HepG2 (cell line): ENCODE measurements at regions of chr2 and their contacts with region 1.

Region 1: DNA sequence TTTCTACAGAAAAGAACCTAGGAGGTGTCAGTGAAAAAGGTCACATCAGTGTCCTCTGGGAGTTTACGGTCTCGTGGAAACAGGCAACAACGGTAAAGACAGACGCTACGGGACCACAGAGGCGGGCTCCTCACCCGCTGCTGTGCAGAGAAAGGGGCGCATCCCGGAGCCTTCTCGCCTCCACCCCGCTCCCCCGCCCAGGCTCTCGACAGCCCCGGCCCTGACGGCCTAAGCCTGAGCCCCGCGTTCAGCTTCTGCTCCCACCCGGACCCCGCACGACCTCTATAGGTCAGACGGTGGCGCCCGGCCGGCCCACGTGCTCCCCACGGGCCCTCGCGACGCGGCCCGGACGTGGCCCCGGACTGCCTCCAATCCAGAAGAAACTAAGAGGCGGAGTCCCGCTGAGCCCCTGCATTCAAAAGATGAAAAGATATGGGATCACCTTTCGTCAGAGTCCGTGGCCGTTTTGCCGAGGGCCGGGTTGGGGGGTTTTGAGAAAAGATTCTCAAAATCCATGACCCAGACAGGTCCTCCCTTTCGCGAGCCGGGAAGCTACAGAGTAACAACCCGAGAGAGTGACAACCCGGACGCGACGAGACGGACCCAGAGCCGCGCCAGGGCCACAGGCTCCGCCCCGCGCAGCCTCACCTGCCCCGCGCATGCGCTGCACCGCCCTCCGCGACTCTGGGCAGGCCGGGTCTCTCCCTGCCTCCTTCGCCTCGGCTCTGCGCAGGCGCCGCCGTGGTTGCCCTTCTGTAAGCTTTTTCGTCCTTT is at the start of gene ZC3H8:
- DNase-seq: peak; percentile 90
- ATAC-seq: peak; percentile 95
- H3K4me3 ChIP-seq: peak within 1 kb of the TSS; percentile 69 to 80 (median 75)
- H3K27ac ChIP-seq: peak within 1 kb of the TSS; percentile 79
- H3K4me1 ChIP-seq: peaks cover 42% of the 10 kb centered on the region
- H3K27me3 ChIP-seq: 0 out of 5 replicates have a peak, but pooled peaks cover 0 to 1% of the 10 kb centered on the region in 2 experiments
- CTCF ChIP-seq: peak; percentile 58
- EP300 ChIP-seq: no peak
- POLR2A ChIP-seq: peak; percentile 91 to 94
- RAD21 ChIP-seq: peak; percentile 43; the same call in 1 of the 2 replicates
- total RNA-seq, gene ZC3H8: 15.4 and 17.0 TPM in 2 replicates

Region 2: DNA sequence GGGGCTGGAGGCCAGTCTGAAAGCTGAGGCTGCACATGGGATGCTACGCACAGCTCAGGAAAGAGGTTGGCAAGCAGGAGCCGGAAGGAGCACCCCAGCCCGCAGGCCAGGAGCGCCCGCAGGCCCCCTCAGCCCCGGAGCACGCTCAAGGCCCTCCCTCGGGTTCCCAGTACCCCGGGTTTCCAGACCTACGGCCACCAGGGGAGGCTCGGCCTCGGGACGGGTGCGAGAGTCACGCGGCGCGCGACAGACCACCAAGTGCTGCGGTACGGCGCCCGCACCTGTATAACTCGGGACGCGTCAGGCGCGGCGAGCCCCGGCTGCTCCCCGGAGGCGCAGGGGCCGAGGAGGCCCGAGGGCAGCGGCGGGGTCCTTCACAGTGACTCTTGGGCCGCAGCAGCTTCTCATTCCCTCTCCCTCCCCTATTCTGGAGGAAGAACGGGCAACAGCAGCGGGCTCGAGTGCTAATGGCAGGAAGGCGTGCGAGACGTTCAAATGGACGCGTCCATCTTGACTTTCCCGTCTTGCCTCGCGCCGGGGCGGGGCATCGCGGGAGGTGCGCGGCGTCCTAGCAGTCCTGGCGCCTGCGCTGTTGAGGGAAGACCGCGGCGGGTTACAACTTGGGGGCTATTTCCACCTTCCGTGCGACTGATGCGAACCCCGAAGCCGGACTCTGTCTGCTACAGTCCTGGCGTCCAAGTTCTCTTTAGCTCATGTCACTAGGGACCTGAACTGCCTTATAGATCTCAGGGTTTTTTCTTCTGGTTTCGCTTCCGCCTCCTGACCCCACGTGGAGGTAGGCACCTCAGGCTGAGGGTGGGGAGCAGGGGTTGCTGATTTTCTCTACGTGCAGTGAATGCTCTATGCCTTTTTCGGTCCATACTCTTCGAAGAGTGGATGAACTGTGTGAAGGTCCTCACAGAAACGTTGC is 370.7 kb before region 1 on chr2 and contains the start of gene ANAPC1:
- CTCF ChIA-PET with region 1: no interaction called
- POLR2A ChIA-PET with region 1: no interaction called
- in situ Hi-C with region 1: no loop called
- intact Hi-C with region 1: loop called (anchors 10 kb)
- DNase-seq: peak; percentile 85
- ATAC-seq: peak; percentile 96
- H3K4me3 ChIP-seq: peak within 1 kb of the TSS; percentile 89 to 97 (median 96)
- H3K27ac ChIP-seq: peak within 1 kb of the TSS; percentile 87
- H3K4me1 ChIP-seq: peaks cover 26% of the 10 kb centered on the region
- H3K27me3 ChIP-seq: no peaks in the 10 kb centered on the region; a peak in 1 of 5 replicates
- CTCF ChIP-seq: peak; percentile 15
- EP300 ChIP-seq: no peak; a peak in 1 of 4 replicates
- POLR2A ChIP-seq: peak; percentile 97 to 99
- RAD21 ChIP-seq: peak; percentile 53
- total RNA-seq, gene ANAPC1: 89.7 and 109 TPM in 2 replicates

Region 3: GRCh38 chr2:112121682-112122254 is 132.9 kb before region 1 on chr2:
- CTCF ChIA-PET with region 1: no interaction called
- POLR2A ChIA-PET with region 1: interaction called, 3 read pairs
- in situ Hi-C with region 1: no loop called
- intact Hi-C with region 1: loop called (anchors 5 kb)
- DNase-seq: peak; percentile 55
- ATAC-seq: no peak
- H3K4me3 ChIP-seq: no peak overlapping the region
- H3K27ac ChIP-seq: no peak overlapping the region
- H3K4me1 ChIP-seq: no peaks in the 10 kb centered on the region
- H3K27me3 ChIP-seq: no peaks in the 10 kb centered on the region
- CTCF ChIP-seq: peak; percentile 73
- EP300 ChIP-seq: no peak
- POLR2A ChIP-seq: no peak
- RAD21 ChIP-seq: peak; percentile 56; the same call in 1 of the 2 replicates

Region 4: GRCh38 chr2:112138159-112138773 is 116.4 kb before region 1 on chr2 and contains the start of gene FBLN7:
- CTCF ChIA-PET with region 1: no interaction called
- POLR2A ChIA-PET with region 1: interaction called, 8 read pairs
- in situ Hi-C with region 1: no loop called
- intact Hi-C with region 1: loop called (anchors 5 kb)
- DNase-seq: no peak
- ATAC-seq: peak; percentile 58
- H3K4me3 ChIP-seq: peak within 1 kb of the TSS; percentile 59 to 83 (median 63)
- H3K27ac ChIP-seq: peak within 1 kb of the TSS; percentile 54
- H3K4me1 ChIP-seq: peaks cover 33% of the 10 kb centered on the region
- H3K27me3 ChIP-seq: no peaks in the 10 kb centered on the region; a peak in 2 of 5 replicates
- CTCF ChIP-seq: no peak
- EP300 ChIP-seq: no peak
- POLR2A ChIP-seq: no peak; a peak in 1 of 4 replicates
- RAD21 ChIP-seq: peak; percentile 23; the same call in 1 of the 2 replicates
- total RNA-seq, gene FBLN7: 0.95 and 1.4 TPM in 2 replicates

Region 5: GRCh38 chr2:112187805-112188596 is 66.7 kb before region 1 on chr2:
- CTCF ChIA-PET with region 1: no interaction called
- POLR2A ChIA-PET with region 1: no interaction called
- in situ Hi-C with region 1: no loop called
- intact Hi-C with region 1: no loop called
- DNase-seq: no peak
- ATAC-seq: no peak
- H3K4me3 ChIP-seq: no peak overlapping the region
- H3K27ac ChIP-seq: no peak overlapping the region
- H3K4me1 ChIP-seq: no peaks in the 10 kb centered on the region
- H3K27me3 ChIP-seq: no peaks in the 10 kb centered on the region
- CTCF ChIP-seq: no peak
- EP300 ChIP-seq: no peak
- POLR2A ChIP-seq: no peak
- RAD21 ChIP-seq: no peak

Region 6: GRCh38 chr2:112433932-112434730 is 179.5 kb after region 1 on chr2:
- CTCF ChIA-PET with region 1: interaction called, 18 read pairs
- POLR2A ChIA-PET with region 1: no interaction called
- in situ Hi-C with region 1: loop called (anchors 25 kb)
- intact Hi-C with region 1: loop called (anchors 1 kb)
- DNase-seq: no peak
- ATAC-seq: no peak
- H3K4me3 ChIP-seq: peak overlapping the region in 1 of 3 experiments; percentile 58; a peak in 1 of 6 replicates
- H3K27ac ChIP-seq: no peak overlapping the region
- H3K4me1 ChIP-seq: peaks cover 37% of the 10 kb centered on the region
- H3K27me3 ChIP-seq: peaks cover 0 to 18% of the 10 kb centered on the region in 2 experiments; a peak in 1 of 5 replicates
- CTCF ChIP-seq: no peak
- EP300 ChIP-seq: no peak
- POLR2A ChIP-seq: no peak
- RAD21 ChIP-seq: no peak

Region 7: DNA sequence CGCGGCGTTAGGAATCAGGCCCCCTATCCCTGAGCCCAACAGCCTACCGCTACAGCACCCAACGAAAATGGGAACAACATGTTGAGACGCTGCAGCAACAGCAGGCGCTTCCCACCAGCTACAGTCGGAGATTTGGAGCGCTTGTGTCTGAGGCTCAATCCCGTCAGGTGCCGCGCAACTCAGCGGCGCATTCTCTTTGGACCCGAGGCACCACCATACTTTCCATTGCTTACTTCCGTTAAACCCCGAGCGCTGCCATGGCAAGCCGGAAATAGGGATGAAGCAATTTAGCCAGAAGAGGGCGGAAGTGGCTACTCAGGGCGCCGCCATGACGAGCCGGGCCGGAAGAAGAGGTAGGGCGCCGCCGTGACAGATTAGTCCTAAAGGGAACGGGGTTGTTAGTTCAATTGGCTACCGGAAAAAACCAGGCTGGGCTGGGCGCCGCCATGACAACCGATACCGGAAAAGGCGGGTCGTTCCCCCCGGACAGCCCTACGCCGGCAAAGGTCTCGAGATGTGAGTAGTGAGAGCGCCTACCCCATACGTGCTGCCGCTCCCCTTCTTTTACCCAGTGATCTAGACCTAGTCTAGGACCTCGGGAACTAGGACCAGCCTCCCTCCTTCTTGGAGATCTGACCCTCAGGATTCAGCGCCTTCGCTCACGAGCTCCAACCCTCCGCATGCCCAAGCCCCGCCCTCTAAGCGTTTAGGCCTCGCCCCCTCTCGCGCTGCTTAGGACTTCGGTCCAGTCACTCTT is 329.7 kb after region 1 on chr2 and contains the start of gene CHCHD5:
- CTCF ChIA-PET with region 1: no interaction called
- POLR2A ChIA-PET with region 1: no interaction called
- in situ Hi-C with region 1: no loop called
- intact Hi-C with region 1: loop called (anchors 10 kb)
- DNase-seq: peak; percentile 98
- ATAC-seq: peak; percentile 89
- H3K4me3 ChIP-seq: peak within 1 kb of the TSS; percentile 76 to 95 (median 87)
- H3K27ac ChIP-seq: peak within 1 kb of the TSS; percentile 97
- H3K4me1 ChIP-seq: peaks cover 40% of the 10 kb centered on the region
- H3K27me3 ChIP-seq: peaks cover 0 to 4% of the 10 kb centered on the region in 2 experiments; a peak in 1 of 5 replicates
- CTCF ChIP-seq: peak; percentile 60
- EP300 ChIP-seq: peak in 1 of 2 experiments; percentile 58; a peak in 3 of 4 replicates
- POLR2A ChIP-seq: peak; percentile 88 to 95
- RAD21 ChIP-seq: no peak; the same call in 1 of the 2 replicates
- total RNA-seq, gene CHCHD5: 22.8 and 23.9 TPM in 2 replicates

Region 8: GRCh38 chr2:114056294-114057143 is 1801.9 kb after region 1 on chr2:
- CTCF ChIA-PET with region 1: no interaction called
- POLR2A ChIA-PET with region 1: no interaction called
- in situ Hi-C with region 1: no loop called
- intact Hi-C with region 1: no loop called
- DNase-seq: no peak
- ATAC-seq: no peak
- H3K4me3 ChIP-seq: no peak overlapping the region
- H3K27ac ChIP-seq: no peak overlapping the region
- H3K4me1 ChIP-seq: no peaks in the 10 kb centered on the region
- H3K27me3 ChIP-seq: peaks cover 0 to 25% of the 10 kb centered on the region in 2 experiments; a peak in 3 of 5 replicates
- CTCF ChIP-seq: no peak
- EP300 ChIP-seq: no peak
- POLR2A ChIP-seq: no peak
- RAD21 ChIP-seq: no peak